Activated T-helper 2 cell treated with anti-CD3 and anti-CD28 coated beads, Interferon-gamma antibody, Interleukin-2, Interleukin-4, amounts not matched to agents 10 μg/mL and 5 μg/mL and 100 μg/mL, durations not matched to agents 14 hours and 24 hours and 36 hours (primary cell): ENCODE measurements at regions of chr15 and their contacts with region 1.

Region 1: DNA sequence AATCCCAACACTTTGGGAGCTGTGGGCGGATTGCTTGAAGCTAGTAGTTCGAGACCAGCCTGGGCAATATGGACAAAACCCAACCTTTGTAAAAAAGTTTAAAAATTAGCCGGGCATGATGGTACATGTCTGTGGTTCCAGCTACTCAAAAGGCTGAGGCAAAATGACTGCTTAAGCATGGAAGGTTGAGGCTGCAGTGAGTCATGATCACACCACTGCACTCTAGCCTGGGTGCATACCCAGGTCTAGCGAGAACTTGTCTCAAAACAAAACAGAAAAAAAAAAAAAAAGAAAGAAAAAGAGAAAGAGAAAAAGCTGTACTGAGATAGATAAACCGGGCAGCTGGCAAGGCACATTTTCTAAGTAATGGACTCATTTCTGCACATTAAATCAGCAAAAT is 10.6 kb downstream of the ARPP19 start:
- DNase-seq: peak; percentile 57
- H3K4me3 Mint-ChIP-seq: no peak overlapping the region
- H3K27ac Mint-ChIP-seq: peak overlapping the region; percentile 96
- H3K4me1 Mint-ChIP-seq: peaks cover 55% of the 10 kb centered on the region
- H3K27me3 Mint-ChIP-seq: no peaks in the 10 kb centered on the region

Region 2: GRCh38 chr15:52221730-52222129 is 336.5 kb before region 1 on chr15:
- intact Hi-C with region 1: loop called (anchors 1 kb)
- DNase-seq: no peak
- H3K4me3 Mint-ChIP-seq: peak overlapping the region; percentile 77
- H3K27ac Mint-ChIP-seq: peak overlapping the region; percentile 82
- H3K4me1 Mint-ChIP-seq: peaks cover 36% of the 10 kb centered on the region
- H3K27me3 Mint-ChIP-seq: no peaks in the 10 kb centered on the region

Region 3: GRCh38 chr15:52331490-52332240 is 226.5 kb before region 1 on chr15:
- intact Hi-C with region 1: loop called (anchors 1 kb)
- DNase-seq: peak; percentile 54
- H3K4me3 Mint-ChIP-seq: peak overlapping the region; percentile 19
- H3K27ac Mint-ChIP-seq: peak overlapping the region; percentile 66
- H3K4me1 Mint-ChIP-seq: peaks cover 24% of the 10 kb centered on the region
- H3K27me3 Mint-ChIP-seq: no peaks in the 10 kb centered on the region

Region 4: GRCh38 chr15:52440400-52440799 is 117.8 kb before region 1 on chr15:
- intact Hi-C with region 1: no loop called
- DNase-seq: no peak
- H3K4me3 Mint-ChIP-seq: no peak overlapping the region
- H3K27ac Mint-ChIP-seq: no peak overlapping the region
- H3K4me1 Mint-ChIP-seq: peaks cover 14% of the 10 kb centered on the region
- H3K27me3 Mint-ChIP-seq: no peaks in the 10 kb centered on the region

Region 5: GRCh38 chr15:52496776-52497470 is 61.3 kb before region 1 on chr15:
- intact Hi-C with region 1: loop called (anchors 5 kb)
- DNase-seq: no peak
- H3K4me3 Mint-ChIP-seq: no peak overlapping the region
- H3K27ac Mint-ChIP-seq: no peak overlapping the region
- H3K4me1 Mint-ChIP-seq: peaks cover 10% of the 10 kb centered on the region
- H3K27me3 Mint-ChIP-seq: no peaks in the 10 kb centered on the region

Region 6: DNA sequence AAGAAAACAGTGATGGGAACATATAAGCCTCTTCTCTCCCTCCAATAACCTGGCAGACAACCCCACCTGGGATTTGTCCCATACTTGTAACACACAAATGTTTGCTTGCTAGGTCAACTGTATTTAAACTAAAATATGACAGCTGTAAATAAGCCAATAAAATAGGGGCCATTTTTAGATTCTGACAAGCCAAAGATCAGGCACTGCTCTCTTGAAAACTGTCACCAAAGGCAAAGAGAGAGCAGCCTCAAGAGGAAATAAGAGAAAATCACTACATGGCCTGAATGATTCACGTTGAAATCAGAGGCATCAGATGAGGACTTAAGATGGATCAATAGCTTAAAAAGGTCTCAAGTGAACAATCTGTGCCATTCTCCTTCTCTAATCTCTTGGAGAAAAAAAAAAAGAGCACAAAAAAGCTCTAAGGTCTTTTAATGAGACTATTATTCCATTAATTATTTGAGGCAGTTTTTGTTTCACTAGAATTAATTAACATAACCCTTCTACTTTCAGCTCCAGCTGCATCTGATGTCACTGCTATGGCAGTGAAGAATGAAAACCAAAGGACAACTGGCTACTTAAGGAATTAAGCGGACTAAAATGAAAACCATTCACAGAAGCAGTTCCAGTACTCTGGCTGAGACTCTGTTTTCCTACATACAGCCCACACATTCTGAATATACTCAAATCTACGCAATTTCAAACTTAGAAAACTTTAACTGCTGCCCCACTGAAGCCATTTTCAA is 48.5 kb before region 1 on chr15:
- intact Hi-C with region 1: no loop called
- DNase-seq: no peak
- H3K4me3 Mint-ChIP-seq: no peak overlapping the region
- H3K27ac Mint-ChIP-seq: no peak overlapping the region
- H3K4me1 Mint-ChIP-seq: peaks cover 10% of the 10 kb centered on the region
- H3K27me3 Mint-ChIP-seq: peaks cover 2% of the 10 kb centered on the region

Region 7: GRCh38 chr15:52568601-52569256 is 10.5 kb after region 1 on chr15 and contains the start of gene ARPP19:
- intact Hi-C with region 1: loop called (anchors 1 kb)
- DNase-seq: peak; percentile 80
- H3K4me3 Mint-ChIP-seq: peak within 1 kb of the TSS; percentile 96
- H3K27ac Mint-ChIP-seq: peak within 1 kb of the TSS; percentile 99
- H3K4me1 Mint-ChIP-seq: peaks cover 30% of the 10 kb centered on the region
- H3K27me3 Mint-ChIP-seq: no peaks in the 10 kb centered on the region
- total RNA-seq, gene ARPP19: 178 and 182 TPM in 2 replicates

Region 8: DNA sequence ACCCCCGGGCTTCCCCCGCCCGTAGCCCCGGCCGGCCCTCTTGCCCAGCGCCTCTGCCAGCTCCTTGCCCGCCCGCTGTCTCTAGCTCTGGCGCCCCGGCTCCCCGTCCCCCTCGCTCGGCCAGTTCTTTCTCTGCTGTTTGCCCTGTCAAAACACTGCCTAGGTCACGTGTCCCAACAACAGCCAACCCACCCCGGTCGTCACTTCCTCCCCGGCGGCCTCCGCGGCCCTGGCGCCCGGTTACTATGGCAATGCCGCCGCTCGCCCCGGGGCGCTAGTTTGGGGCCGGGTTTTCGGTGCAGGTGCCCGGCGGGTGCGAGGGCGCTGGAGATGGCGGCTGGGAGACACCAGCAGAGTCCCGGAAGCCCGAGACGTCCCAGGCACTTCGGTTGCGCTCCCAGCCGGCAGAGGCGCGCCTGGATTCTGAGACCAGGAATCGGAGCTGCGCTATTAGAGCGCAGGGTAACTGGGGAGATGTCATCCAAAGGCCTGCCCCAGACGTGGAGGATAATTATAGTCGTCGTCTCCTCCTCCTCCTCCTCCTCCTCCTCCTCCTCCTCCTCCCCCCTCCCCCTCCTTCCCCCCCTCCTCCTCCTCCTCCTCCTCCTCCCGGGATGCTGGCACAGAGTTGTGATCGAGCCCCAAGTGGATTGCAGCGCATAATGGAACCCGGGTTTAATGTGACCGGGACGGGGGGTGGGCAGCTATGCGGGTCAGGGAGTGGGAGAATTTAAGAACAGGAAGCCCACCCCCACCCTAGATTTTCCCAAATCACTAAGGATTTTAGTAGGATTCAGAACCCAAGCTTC is 121.2 kb after region 1 on chr15 and contains the start of gene ATOSA:
- intact Hi-C with region 1: loop called (anchors 2 kb)
- DNase-seq: peak; percentile 89
- H3K4me3 Mint-ChIP-seq: peak within 1 kb of the TSS; percentile 88
- H3K27ac Mint-ChIP-seq: peak within 1 kb of the TSS; percentile 98
- H3K4me1 Mint-ChIP-seq: peaks cover 38% of the 10 kb centered on the region
- H3K27me3 Mint-ChIP-seq: no peaks in the 10 kb centered on the region
- total RNA-seq, gene ATOSA: 14.4 TPM in 2 replicates